Activated CD4-positive, alpha-beta T cell treated with anti-CD3 and anti-CD28 coated beads, Interleukin-2, amount 10 ng/mL, durations not matched to agents 7 days and 5 days (primary cell): ENCODE measurements at regions of chr17 and their contacts with region 1.

Region 1: DNA sequence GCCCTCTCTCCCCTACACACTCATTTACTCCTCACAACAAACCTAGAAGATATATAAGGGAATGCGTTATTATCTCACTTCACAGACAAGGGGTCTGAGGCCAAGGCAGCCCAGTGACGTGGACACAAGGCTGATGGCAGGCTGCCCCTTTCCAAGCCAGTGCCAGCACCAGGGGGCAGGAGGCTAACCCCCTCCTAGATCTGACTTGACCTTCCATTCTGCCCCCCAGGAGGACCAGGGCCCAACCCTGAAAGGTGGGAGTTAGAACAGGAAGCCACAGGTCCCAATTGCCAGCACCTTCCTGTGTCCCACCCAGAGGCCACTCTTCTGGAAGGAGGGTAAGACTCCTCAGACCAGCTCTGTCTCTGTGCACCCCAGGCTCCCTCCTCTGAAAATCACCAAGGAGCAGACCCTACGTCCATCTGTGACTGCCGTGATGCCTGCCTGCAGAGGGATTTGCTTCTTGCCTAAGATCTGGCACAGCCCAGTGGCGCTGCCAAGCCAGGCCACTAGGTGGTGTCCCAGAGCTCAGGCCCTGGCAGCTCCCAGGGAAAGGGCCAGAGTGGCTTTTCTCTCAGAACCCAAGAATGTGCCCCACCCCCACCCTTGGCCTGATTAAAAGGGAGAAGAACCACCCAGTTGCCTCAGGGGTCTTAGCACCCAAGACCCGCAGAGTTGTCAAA is 42.4 kb upstream of the MRPS23 start:
- DNase-seq: peak; percentile 79
- H3K4me3 Mint-ChIP-seq: no peak overlapping the region
- H3K27ac Mint-ChIP-seq: no peak overlapping the region
- H3K4me1 Mint-ChIP-seq: peaks cover 7% of the 10 kb centered on the region
- H3K27me3 Mint-ChIP-seq: peaks cover 8% of the 10 kb centered on the region

Region 2: DNA sequence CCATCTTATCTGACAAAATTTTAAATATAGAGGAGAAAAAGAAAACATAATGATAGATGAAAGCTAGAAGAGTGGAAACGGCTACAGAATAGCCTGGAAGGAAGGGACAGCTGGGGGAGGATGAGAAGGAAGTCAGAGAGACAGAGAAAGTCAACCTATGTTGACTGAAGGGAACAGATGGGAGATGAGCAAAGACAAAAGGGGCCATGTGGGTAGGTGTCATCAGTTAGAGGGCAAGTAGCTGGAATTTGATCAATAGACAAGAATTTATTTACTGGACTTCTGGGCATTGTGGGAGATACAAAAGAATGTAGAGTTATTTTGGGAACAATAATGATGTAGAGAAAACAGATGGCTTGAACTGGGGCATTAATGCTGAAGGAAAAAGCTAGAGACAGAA is 1544.6 kb before region 1 on chr17:
- CTCF ChIA-PET with region 1: no interaction called
- POLR2A ChIA-PET with region 1: no interaction called
- DNase-seq: no peak
- H3K4me3 Mint-ChIP-seq: no peak overlapping the region
- H3K27ac Mint-ChIP-seq: no peak overlapping the region
- H3K4me1 Mint-ChIP-seq: no peaks in the 10 kb centered on the region
- H3K27me3 Mint-ChIP-seq: peaks cover 18% of the 10 kb centered on the region

Region 3: DNA sequence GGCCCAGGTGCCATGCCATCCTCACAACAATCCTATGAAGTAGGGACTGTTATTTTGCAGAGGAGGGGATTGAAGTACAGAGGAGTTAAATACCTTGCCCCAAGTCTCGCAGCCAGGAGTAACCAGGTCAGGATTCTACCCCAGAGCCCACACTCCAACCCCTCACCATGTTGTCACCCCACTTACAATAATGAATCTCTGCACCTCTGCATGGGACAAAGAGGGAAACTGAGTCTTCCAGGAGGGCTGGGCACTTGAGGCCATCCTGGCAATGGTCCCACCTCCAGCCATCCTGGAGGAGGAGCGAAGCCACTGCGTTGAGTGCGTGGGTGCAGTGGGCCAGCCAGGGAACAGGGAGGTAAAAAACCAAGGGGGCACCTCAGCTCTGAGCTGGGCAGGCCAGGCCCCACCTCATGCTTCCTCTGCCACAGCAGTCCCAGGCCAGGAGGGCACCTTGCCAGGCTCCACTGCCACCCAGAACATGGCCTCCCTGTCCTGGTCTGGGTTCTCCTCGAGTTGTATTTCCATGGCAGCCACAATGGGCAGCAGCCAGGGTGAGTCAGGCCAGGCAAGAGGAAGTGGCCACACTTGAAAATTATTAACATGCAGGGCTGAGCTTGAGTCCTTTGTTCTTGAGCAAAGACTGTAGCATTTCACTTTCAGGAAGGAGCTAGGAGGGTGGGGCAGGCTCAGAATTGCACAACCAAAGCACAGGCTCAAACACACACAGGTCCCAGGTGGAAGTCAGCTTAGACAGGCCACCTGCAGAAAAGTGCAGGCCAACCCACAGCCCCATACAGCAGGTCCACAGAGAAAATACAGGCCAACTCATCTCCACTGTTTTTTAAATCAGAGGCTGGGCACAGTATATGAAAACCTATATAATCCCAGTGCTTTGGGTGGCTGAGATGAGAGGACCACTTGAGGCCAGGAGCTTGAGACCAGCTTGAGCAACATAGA is 10.8 kb after region 1 on chr17:
- CTCF ChIA-PET with region 1: interaction called, 10 read pairs
- POLR2A ChIA-PET with region 1: no interaction called
- DNase-seq: peak; percentile 28
- H3K4me3 Mint-ChIP-seq: no peak overlapping the region
- H3K27ac Mint-ChIP-seq: peak overlapping the region; percentile 80
- H3K4me1 Mint-ChIP-seq: peaks cover 50% of the 10 kb centered on the region
- H3K27me3 Mint-ChIP-seq: no peaks in the 10 kb centered on the region

Region 4: DNA sequence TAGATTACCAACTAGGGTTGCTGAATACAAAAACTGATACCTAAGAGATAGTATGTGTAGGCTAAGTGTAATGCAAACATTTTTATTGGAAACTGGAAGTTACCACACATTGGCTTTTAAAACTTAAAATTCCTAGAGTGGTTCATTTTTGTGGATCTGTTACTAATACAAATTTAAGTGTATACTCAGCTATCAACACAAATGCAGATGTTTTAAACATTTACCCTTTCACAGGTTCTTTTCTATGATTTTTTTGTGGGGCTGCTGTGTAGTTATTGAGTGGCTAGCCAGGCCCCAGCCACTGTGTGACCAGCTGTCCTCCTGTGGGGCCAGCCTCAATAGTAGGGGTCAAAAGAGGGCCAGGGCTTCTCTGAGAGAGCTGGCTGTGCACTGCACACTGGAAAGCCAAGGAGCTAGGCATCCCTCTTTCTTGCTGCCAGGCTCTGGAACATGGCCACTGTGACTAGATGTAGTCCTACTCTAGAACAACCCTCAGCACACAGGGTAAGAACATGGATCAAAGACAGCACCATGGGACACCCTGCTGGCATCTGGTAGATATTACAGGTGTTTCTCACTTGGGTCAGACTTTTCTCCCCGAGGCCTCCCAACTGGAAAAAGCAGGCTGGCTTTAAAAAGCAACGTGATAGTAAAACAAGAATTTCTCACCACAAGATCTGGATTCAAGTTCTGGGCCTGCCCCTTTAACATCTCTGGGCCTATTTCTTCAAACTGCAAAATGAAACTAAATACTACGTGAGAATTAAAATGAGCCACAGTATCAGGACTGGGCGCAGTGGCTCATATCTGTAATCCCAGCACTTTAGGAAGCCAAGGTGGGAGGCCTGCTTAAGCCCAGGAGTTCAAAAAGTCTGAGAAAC is 103.0 kb after region 1 on chr17:
- CTCF ChIA-PET with region 1: interaction called, 16 read pairs
- POLR2A ChIA-PET with region 1: no interaction called
- DNase-seq: peak; percentile 62
- H3K4me3 Mint-ChIP-seq: peak overlapping the region; percentile 3
- H3K27ac Mint-ChIP-seq: no peak overlapping the region
- H3K4me1 Mint-ChIP-seq: peaks cover 65% of the 10 kb centered on the region
- H3K27me3 Mint-ChIP-seq: no peaks in the 10 kb centered on the region